H1 (cell line): ENCODE measurements at regions of chr9 and their contacts with region 1.

Region 1: GRCh38 chr9:137200311-137201204 is at the start of gene TPRN:
- DNase-seq: peak; percentile 96 to 97
- H3K4me3 ChIP-seq: peak within 1 kb of the TSS; percentile 64 to 78 (median 69)
- H3K27ac ChIP-seq: no peak within 1 kb of the TSS; the same call in 1 of the 2 replicates
- H3K4me1 ChIP-seq: peaks cover 8 to 28% (median 18%) of the 10 kb centered on the region in 4 experiments
- H3K27me3 ChIP-seq: no peaks in the 10 kb centered on the region
- CTCF ChIP-seq: no peak
- EP300 ChIP-seq: no peak
- POLR2A ChIP-seq: peak in 1 of 2 experiments; percentile 88; a peak in 2 of 3 replicates
- RAD21 ChIP-seq: no peak
- total RNA-seq, gene TPRN: 23.2 and 27.2 TPM in 2 replicates

Region 2: DNA sequence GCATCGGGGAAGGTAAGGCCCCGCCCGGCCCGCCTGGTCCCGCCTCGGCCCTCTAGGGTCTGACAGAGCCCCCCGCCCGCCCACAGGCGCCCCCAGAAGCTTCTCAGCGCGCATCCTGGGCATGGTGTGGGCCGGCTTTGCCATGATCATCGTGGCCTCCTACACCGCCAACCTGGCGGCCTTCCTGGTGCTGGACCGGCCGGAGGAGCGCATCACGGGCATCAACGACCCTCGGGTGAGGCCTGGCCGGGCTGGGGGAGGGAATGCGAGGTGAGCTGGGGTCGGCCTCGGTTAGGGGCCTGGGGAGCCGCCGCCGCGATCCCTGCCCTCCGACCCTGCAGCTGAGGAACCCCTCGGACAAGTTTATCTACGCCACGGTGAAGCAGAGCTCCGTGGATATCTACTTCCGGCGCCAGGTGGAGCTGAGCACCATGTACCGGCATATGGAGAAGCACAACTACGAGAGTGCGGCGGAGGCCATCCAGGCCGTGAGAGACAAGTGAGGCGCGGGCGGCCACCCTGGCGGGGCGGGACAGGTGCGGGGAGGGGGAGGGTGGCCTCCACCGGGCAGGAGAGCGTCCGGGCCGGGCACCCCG is 38.0 kb before region 1 on chr9:
- CTCF ChIA-PET with region 1: no interaction called
- POLR2A ChIA-PET with region 1: interaction called, 11 read pairs
- DNase-seq: peak in 1 of 2 experiments; percentile 66
- H3K4me3 ChIP-seq: peak overlapping the region; percentile 32 to 61 (median 34)
- H3K27ac ChIP-seq: no peak overlapping the region
- H3K4me1 ChIP-seq: peaks cover 0 to 11% (median 6%) of the 10 kb centered on the region in 4 experiments; a peak in 6 of 7 replicates
- H3K27me3 ChIP-seq: peaks cover 53 to 98% (median 90%) of the 10 kb centered on the region in 4 experiments
- CTCF ChIP-seq: peak in 1 of 3 experiments; percentile 3; a peak in 1 of 4 replicates
- EP300 ChIP-seq: no peak
- POLR2A ChIP-seq: no peak
- RAD21 ChIP-seq: no peak; a peak in 1 of 4 replicates

Region 3: DNA sequence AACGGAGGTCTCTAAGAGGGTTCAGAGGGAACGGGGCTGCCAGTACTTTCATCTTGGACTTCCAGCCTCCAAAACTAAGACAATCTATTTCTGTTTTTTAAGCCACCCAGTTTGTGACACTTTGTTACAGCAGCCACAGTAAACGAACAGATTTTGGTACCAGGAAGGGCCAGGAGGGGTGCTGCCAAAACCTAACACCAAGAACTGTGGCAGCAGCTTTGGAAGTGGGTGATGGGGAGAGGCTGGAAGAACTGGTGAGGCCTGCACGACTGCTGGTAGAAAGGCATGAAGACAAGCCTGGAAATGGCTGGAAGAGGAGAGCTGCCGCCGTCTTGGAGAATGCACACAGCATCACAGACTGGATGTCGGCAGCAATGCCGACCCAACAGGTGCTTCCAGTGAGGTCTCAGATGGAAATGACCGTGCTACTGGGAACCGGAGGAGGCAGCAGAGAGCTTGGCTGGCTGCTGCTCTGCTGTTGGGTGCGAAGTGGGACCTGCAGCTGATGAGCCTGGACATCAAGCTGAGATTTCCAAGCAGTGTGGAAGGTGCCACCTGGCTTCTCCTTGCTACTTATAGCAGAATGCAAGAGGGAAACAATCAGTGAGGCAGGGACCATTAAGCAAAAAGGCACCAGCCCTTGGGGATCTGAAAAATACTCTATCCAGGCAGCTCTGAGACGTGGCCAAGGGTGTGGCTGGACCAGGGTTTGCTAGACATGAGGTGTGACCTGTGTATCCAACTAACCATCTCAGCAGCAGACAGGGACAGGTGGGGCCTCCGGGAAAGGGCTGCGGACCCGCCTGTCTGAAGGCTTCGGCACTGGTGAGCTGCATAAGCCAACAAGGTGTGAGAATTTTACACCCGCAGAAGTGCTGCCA is 24.0 kb before region 1 on chr9:
- CTCF ChIA-PET with region 1: interaction called, 21 read pairs
- POLR2A ChIA-PET with region 1: interaction called, 8 read pairs
- DNase-seq: no peak
- H3K4me3 ChIP-seq: no peak overlapping the region
- H3K27ac ChIP-seq: no peak overlapping the region
- H3K4me1 ChIP-seq: peaks cover 0 to 8% (median 3%) of the 10 kb centered on the region in 4 experiments; a peak in 5 of 7 replicates
- H3K27me3 ChIP-seq: peaks cover 0 to 10% (median 5%) of the 10 kb centered on the region in 4 experiments; a peak in 4 of 7 replicates
- CTCF ChIP-seq: peak in 2 of 3 experiments; percentile 58 to 76; a peak in 3 of 4 replicates
- EP300 ChIP-seq: no peak
- POLR2A ChIP-seq: no peak; a peak in 1 of 3 replicates
- RAD21 ChIP-seq: peak; percentile 38 to 57

Region 4: DNA sequence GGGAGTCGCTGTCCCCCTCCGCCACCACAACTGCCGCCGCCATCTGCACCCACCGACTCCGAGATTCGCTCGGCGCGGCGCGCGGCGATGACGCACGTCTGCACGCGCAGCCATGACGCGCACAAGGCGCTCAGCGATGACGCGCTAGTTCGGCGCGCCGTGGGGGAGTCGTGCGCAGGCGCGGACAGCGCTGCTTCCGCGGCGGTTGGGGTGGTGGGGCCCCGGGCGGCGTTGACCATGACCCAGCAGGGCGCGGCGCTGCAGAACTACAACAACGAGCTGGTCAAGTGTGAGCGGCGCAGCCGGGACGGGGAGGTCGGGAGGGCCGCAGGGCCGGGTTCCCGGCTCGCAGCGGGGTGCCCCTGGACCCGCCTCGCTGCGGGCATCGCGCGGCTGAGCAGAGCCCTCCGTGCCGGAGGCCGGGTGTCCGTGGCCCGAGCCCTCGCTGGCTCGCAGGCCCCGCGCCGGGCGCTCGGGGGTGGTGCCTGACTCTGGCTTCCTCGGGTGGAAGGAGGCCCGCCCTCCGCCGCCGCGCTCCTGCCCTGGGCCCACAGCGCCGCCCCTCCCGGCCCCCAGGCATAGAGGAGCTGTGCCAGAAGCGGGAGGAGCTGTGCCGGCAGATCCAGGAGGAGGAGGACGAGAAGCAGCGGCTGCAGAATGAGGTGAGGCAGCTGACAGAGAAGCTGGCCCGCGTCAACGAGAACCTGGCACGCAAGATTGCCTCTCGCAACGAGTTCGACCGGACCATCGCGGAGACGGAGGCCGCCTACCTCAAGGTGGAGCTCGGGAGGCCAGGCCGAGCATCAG is 11.9 kb before region 1 on chr9 and contains the starts of genes ANAPC2 and SSNA1:
- CTCF ChIA-PET with region 1: interaction called, 23 read pairs
- POLR2A ChIA-PET with region 1: interaction called, 107 read pairs
- DNase-seq: peak; percentile 80 to 98
- H3K4me3 ChIP-seq: peak within 1 kb of the TSS; percentile 71 to 92 (median 82)
- H3K27ac ChIP-seq: peak within 1 kb of the TSS; percentile 57; the same call in 1 of the 2 replicates
- H3K4me1 ChIP-seq: peaks cover 0 to 17% (median 6%) of the 10 kb centered on the region in 4 experiments; a peak in 5 of 7 replicates
- H3K27me3 ChIP-seq: no peaks in the 10 kb centered on the region; a peak in 1 of 7 replicates
- CTCF ChIP-seq: peak in 2 of 3 experiments; percentile 37 to 57; a peak in 3 of 4 replicates
- EP300 ChIP-seq: peak in 1 of 2 experiments; percentile 25; a peak in 1 of 3 replicates
- POLR2A ChIP-seq: peak in 1 of 2 experiments; percentile 88; a peak in 2 of 3 replicates
- RAD21 ChIP-seq: peak; percentile 34 to 45; a peak in 3 of 4 replicates
- total RNA-seq, gene ANAPC2: 37.7 and 41.9 TPM in 2 replicates
- total RNA-seq, gene SSNA1: 87.3 and 91.3 TPM in 2 replicates

Region 5: DNA sequence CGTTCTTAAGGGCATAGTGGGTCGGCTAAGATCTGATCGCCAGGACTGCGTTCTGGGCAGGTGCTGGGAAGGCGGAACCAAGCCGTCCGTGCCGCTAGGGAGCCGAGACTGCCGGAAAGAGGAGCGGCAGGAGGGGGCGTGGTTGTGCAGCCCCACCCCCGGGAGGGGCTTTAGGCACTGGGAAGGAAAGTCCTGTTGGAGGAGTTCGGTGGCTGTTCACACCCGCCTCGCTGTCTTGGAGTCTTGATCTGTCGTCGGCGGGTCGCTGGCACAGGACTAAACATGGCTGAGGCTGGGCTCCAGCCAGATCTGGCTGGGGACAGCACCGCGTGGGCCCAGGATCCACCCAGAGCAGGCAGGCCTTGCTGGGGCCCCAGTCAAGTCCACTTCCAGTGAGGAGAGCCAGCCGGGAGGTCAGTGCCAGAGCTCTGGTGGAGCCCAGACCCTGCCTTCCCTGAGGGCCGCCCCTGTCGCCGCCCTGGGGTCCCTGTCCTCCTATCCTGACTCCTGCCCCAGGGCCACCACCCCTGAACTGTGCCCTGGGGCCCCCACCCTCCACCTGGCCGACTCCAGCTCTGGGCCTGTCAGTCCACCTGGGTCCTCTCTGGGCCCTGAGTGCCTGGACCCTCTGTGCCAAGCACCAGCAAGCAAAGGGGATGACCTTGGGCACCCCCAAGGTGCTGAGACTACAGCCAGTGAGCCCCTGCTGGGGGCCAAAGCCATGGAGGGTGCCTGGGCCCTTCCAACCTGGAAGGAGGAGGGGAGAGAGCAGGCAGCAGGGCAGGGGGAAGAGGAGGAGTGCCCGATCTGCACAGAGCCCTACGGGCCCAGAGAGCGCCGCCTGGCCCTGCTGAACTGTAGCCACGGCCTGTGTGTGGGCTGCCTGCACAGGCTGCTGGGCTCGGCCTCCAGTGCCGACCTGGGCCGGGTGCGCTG is 17.0 kb after region 1 on chr9:
- CTCF ChIA-PET with region 1: interaction called, 204 read pairs
- POLR2A ChIA-PET with region 1: interaction called, 205 read pairs
- DNase-seq: peak; percentile 56 to 87
- H3K4me3 ChIP-seq: no peak overlapping the region
- H3K27ac ChIP-seq: no peak overlapping the region
- H3K4me1 ChIP-seq: peaks cover 0 to 10% (median 4%) of the 10 kb centered on the region in 4 experiments; a peak in 5 of 7 replicates
- H3K27me3 ChIP-seq: no peaks in the 10 kb centered on the region; a peak in 2 of 7 replicates
- CTCF ChIP-seq: peak in 1 of 3 experiments; percentile 1; a peak in 1 of 4 replicates
- EP300 ChIP-seq: no peak
- POLR2A ChIP-seq: peak in 1 of 2 experiments; percentile 37; a peak in 1 of 3 replicates
- RAD21 ChIP-seq: no peak

Region 6: GRCh38 chr9:137223078-137223970 is 22.8 kb after region 1 on chr9:
- CTCF ChIA-PET with region 1: interaction called, 204 read pairs
- POLR2A ChIA-PET with region 1: interaction called, 205 read pairs
- DNase-seq: peak; percentile 96 to 99
- H3K4me3 ChIP-seq: peak overlapping the region; percentile 67 to 92 (median 79)
- H3K27ac ChIP-seq: no peak overlapping the region
- H3K4me1 ChIP-seq: peaks cover 0 to 20% (median 10%) of the 10 kb centered on the region in 4 experiments; a peak in 5 of 7 replicates
- H3K27me3 ChIP-seq: no peaks in the 10 kb centered on the region; a peak in 2 of 7 replicates
- CTCF ChIP-seq: no peak
- EP300 ChIP-seq: no peak
- POLR2A ChIP-seq: peak in 1 of 2 experiments; percentile 53; a peak in 1 of 3 replicates
- RAD21 ChIP-seq: no peak

Region 7: GRCh38 chr9:137235424-137236237 is 35.1 kb after region 1 on chr9:
- CTCF ChIA-PET with region 1: interaction called, 204 read pairs
- POLR2A ChIA-PET with region 1: interaction called, 1,462 read pairs
- DNase-seq: no peak
- H3K4me3 ChIP-seq: no peak overlapping the region
- H3K27ac ChIP-seq: no peak overlapping the region
- H3K4me1 ChIP-seq: peaks cover 0 to 12% (median 8%) of the 10 kb centered on the region in 4 experiments; a peak in 6 of 7 replicates
- H3K27me3 ChIP-seq: no peaks in the 10 kb centered on the region
- CTCF ChIP-seq: peak in 1 of 3 experiments; percentile 38; a peak in 2 of 4 replicates
- EP300 ChIP-seq: no peak
- POLR2A ChIP-seq: no peak
- RAD21 ChIP-seq: peak in 1 of 2 experiments; percentile 13; a peak in 1 of 4 replicates